ENCODE measurements at regions of chr2 and their contacts with region 1.

Region 1: DNA sequence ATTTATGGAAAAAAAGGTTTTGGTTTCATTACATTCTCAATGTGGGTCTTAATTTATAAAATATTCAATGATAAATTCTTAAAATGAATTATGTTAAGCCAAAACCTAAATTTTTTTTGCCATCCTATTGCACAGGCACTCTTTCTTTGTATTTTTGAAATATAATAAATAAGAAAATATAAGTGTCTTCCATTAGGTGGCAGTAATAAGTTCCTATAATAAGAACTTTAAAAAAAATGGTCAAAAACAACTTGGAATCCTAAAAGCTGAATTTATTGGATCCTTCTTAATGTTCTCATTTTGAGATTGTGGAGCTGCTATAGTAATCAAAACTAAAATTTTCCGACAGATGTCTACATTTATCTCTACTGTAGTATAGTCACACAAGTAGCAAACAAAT is 5.7 kb downstream of the CALCRL start:
- DNase-seq: no peak
- ATAC-seq: no peak
- H3K4me3 ChIP-seq: no peak overlapping the region
- H3K27ac ChIP-seq: no peak overlapping the region
- H3K4me1 ChIP-seq: no peaks in the 10 kb centered on the region
- H3K27me3 ChIP-seq: no peaks in the 10 kb centered on the region
- CTCF ChIP-seq: peak in 2 of 3 experiments; percentile 3 to 5; a peak in 1 of 6 replicates
- EP300 ChIP-seq: no peak
- POLR2A ChIP-seq: no peak
- RAD21 ChIP-seq: no peak

Region 2: DNA sequence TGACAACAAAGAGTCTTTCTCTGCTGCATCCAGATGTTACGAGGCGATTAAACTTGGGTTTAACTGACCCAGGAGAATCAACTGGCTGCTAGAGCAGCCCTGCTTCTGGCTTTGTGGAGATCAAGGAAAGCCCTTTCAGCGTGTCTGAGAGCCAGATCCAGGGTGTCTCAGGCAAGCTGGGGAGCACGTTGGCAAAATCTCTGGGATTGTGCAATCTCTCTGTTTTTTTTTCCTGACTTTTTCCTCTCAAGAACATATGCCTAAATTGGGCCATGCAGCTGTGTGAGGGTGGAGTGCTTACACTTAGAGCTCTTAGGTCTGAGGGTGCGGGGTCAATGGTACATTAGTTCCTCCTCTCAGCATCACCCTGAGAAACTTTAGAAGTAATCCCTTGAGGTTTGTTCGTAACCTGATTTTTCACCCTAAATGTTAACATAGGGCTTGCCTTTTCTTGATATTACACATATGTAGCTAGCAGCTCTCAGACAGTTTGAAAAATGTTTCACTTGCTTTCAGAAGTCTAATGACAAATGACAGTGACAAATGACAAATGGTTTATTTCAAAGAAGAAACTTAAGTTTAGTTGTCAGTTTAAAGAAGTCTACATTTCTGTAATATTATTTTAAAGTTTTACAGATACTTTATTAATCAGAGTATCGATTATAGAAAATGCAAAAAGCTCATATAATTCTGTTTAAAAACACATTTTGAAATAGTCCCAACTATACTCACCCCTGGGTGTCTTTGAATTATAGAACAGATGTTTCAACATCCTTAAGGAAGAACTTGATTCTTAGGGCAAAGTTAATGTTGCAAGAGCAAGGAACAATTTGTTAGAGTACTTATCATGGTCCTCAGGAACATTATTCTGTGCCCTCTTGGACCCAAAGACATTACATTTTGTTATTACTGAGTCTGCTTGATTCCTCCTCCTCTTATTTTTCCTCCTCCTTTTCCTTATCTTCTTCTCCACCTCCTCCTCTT is 555.0 kb before region 1 on chr2:
- CTCF ChIA-PET with region 1: interaction called, 7 read pairs
- POLR2A ChIA-PET with region 1: no interaction called
- RAD21 ChIA-PET with region 1: interaction called, 21 read pairs
- SMC1A ChIA-PET with region 1: interaction called, 14 read pairs
- in situ Hi-C with region 1: no loop called
- intact Hi-C with region 1: no loop called
- DNase-seq: peak; percentile 26
- ATAC-seq: peak; percentile 92
- H3K4me3 ChIP-seq: no peak overlapping the region
- H3K27ac ChIP-seq: no peak overlapping the region
- H3K4me1 ChIP-seq: no peaks in the 10 kb centered on the region
- H3K27me3 ChIP-seq: no peaks in the 10 kb centered on the region
- CTCF ChIP-seq: no peak
- EP300 ChIP-seq: peak; percentile 53 to 59; a peak in 2 of 4 replicates
- POLR2A ChIP-seq: no peak
- RAD21 ChIP-seq: no peak

Region 3: DNA sequence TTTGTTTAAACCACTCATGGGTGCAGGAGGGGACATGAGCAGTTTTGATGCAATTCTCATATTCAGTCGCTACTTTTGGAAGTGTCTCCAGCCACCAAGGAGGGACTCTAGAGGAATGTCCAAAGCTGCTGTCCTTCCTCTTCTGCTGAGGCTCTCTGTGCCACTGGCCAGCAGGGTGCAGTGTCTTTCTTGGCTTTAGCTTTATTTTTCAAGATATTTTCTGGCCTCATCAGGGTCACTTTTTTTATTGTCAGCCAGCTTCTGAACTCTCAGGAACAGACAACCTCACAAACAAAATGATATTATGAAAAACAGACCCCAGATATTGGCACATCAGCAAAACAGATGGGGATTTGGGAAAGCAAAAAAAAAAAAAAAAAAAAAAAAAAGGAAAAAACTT is 304.1 kb before region 1 on chr2:
- CTCF ChIA-PET with region 1: interaction called, 23 read pairs
- POLR2A ChIA-PET with region 1: no interaction called
- RAD21 ChIA-PET with region 1: interaction called, 26 read pairs
- SMC1A ChIA-PET with region 1: interaction called, 24 read pairs
- in situ Hi-C with region 1: loop called (anchors 10 kb)
- intact Hi-C with region 1: no loop called
- DNase-seq: no peak
- ATAC-seq: peak; percentile 91
- H3K4me3 ChIP-seq: no peak overlapping the region
- H3K27ac ChIP-seq: no peak overlapping the region
- H3K4me1 ChIP-seq: no peaks in the 10 kb centered on the region
- H3K27me3 ChIP-seq: no peaks in the 10 kb centered on the region
- CTCF ChIP-seq: peak; percentile 54 to 67 (median 65)
- EP300 ChIP-seq: no peak
- POLR2A ChIP-seq: no peak
- RAD21 ChIP-seq: peak; percentile 77

Region 4: GRCh38 chr2:187299122-187299906 is 143.1 kb before region 1 on chr2:
- CTCF ChIA-PET with region 1: interaction called, 31 read pairs
- POLR2A ChIA-PET with region 1: interaction called, 3 read pairs
- RAD21 ChIA-PET with region 1: interaction called, 13 read pairs
- SMC1A ChIA-PET with region 1: interaction called, 10 read pairs
- in situ Hi-C with region 1: no loop called
- intact Hi-C with region 1: no loop called
- DNase-seq: no peak
- ATAC-seq: peak; percentile 79
- H3K4me3 ChIP-seq: no peak overlapping the region
- H3K27ac ChIP-seq: no peak overlapping the region
- H3K4me1 ChIP-seq: no peaks in the 10 kb centered on the region
- H3K27me3 ChIP-seq: no peaks in the 10 kb centered on the region
- CTCF ChIP-seq: peak; percentile 32 to 49 (median 38); a peak in 4 of 6 replicates
- EP300 ChIP-seq: no peak
- POLR2A ChIP-seq: no peak
- RAD21 ChIP-seq: peak; percentile 69

Region 5: GRCh38 chr2:187403568-187404260 is 38.7 kb before region 1 on chr2:
- CTCF ChIA-PET with region 1: interaction called, 8 read pairs
- POLR2A ChIA-PET with region 1: interaction called, 24 read pairs
- RAD21 ChIA-PET with region 1: interaction called, 45 read pairs
- SMC1A ChIA-PET with region 1: interaction called, 34 read pairs
- in situ Hi-C with region 1: no loop called
- intact Hi-C with region 1: no loop called
- DNase-seq: peak; percentile 15
- ATAC-seq: peak; percentile 57
- H3K4me3 ChIP-seq: no peak overlapping the region
- H3K27ac ChIP-seq: no peak overlapping the region
- H3K4me1 ChIP-seq: no peaks in the 10 kb centered on the region
- H3K27me3 ChIP-seq: no peaks in the 10 kb centered on the region
- CTCF ChIP-seq: no peak
- EP300 ChIP-seq: no peak
- POLR2A ChIP-seq: no peak
- RAD21 ChIP-seq: no peak

Region 6: GRCh38 chr2:187475499-187476248 is 33.3 kb after region 1 on chr2:
- CTCF ChIA-PET with region 1: no interaction called
- POLR2A ChIA-PET with region 1: no interaction called
- RAD21 ChIA-PET with region 1: no interaction called
- SMC1A ChIA-PET with region 1: interaction called, 4 read pairs
- in situ Hi-C with region 1: no loop called
- intact Hi-C with region 1: loop called (anchors 1 kb)
- DNase-seq: no peak
- ATAC-seq: peak; percentile 93
- H3K4me3 ChIP-seq: no peak overlapping the region
- H3K27ac ChIP-seq: peak overlapping the region; percentile 47
- H3K4me1 ChIP-seq: no peaks in the 10 kb centered on the region
- H3K27me3 ChIP-seq: no peaks in the 10 kb centered on the region
- CTCF ChIP-seq: no peak
- EP300 ChIP-seq: peak; percentile 69 to 84; a peak in 2 of 4 replicates
- POLR2A ChIP-seq: no peak
- RAD21 ChIP-seq: no peak

Measured in GM12878 (cell line).